Heart left ventricle (tissue), 16 donors: ENCODE measurements at regions of chr22 and their contacts with region 1.

Region 1: DNA sequence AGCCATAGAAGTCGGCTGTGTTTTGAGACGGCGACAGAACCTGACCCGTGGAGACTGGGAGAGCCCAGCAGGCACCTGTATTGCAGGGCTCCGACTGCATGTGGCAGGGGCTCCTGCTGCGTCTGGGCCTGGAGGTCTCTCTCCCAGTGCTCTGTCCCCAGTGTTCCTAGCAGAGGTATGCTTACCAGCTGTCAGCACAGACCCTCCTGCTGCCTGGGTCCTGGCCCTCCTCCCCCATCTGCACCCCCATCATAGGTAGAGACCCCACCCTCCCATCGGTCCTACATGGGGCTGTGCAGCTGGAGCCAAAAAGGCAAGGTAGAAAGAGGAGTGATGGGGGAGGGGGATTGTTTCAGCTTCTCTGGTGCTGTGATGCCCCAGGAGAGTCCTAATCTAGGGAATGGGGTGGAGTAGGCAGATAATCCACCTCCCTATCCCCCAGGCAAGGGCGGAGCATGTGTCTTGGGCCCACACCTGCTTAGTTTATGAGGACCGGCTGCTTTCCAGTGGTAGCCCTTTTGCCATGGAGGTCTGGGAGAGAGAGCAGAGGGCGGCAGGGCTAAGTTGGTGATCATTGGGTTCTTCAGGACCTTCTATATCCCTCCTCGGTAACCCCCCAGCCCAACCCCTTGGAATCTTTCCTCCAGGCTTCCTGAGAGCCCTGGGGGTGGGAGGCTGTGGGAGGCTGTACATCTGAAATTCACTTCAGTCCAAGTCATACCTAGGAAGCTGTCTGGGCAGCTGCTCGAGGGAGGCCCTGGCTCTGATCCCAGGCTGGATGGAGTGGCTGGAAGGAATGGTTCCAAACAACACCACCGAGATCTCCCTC is 5.4 kb downstream of the SLC7A4 start:
- DNase-seq: peak in 1 of 5 donors; percentile 66
- ATAC-seq: peak; percentile 25 to 59 (median 36)
- H3K4me3 ChIP-seq: no peak overlapping the region
- H3K27ac ChIP-seq: no peak overlapping the region
- H3K4me1 ChIP-seq: peaks cover 0 to 10% (median 1%) of the 10 kb centered on the region in 12 donors
- H3K27me3 ChIP-seq: peaks cover 6 to 38% (median 14%) of the 10 kb centered on the region in 9 donors
- CTCF ChIP-seq: no peak
- POLR2A ChIP-seq: no peak

Region 2: DNA sequence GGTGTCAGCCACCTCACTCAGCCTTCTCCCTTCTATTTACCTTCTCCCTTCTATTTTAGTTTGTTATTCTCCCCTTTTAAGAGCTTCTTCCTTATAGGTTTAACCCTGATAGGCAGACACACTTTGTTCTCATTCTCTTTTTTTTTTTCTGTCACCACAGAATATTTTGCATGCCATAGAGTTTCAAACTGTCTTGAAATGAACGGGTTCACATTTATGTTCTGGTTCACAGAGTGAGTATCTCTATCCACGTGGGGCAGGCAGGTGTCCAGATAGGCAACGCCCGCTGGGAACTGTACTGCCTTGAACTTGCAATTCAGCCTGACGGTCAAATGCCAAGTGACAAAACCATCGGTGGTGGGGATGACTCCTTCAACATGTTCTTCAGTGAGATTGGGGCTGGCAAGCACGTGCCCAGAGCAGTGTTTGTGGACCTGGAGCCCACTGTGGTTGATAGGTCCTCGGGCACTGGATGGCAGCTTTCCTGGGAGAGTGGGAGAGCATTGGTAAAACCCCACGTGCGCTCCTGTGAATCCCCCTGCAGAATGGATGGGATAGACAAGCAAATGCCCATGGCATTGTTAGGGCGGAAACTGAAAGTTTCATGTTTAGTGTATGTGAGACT is 38.3 kb after region 1 on chr22:
- intact Hi-C with region 1: loop called in 1 of 10 experiments (anchors 5 kb)
- DNase-seq: peak in 1 of 5 donors; percentile 15
- ATAC-seq: no peak
- H3K4me3 ChIP-seq: no peak overlapping the region
- H3K27ac ChIP-seq: no peak overlapping the region
- H3K4me1 ChIP-seq: no peaks in the 10 kb centered on the region
- H3K27me3 ChIP-seq: no peaks in the 10 kb centered on the region
- CTCF ChIP-seq: no peak
- POLR2A ChIP-seq: no peak